CD4-positive, alpha-beta T cell (primary cell): ENCODE measurements at regions of chr11 and their contacts with region 1.

Region 1: DNA sequence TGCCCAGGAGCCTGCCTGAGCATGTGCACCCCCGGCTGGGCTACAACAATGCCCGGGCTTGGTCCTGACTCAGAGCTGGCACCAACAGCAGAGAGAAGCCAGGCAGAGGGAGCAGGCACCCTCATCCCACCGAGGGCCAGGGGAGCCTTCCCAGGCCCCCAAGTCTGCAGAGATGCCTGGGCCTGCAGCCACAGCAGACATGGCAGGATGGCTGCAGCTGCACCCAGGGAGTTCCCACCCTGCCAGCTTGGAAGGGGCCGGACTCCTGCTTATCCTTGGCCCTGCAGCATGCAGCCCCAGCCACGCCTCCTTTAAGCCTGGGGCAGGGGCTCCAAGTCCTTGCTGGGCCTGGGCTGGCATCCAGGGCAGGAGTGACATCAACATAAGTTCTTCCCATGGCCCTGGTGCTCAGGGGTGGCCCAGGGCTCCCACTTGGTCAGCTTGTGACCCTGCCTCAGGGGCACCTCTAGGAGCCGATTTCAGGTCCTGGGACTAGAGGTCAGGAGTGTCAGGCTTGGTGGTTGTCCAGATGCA is 26.7 kb downstream of the OR10D3 start:
- DNase-seq: no peak
- ATAC-seq: no peak
- H3K4me3 ChIP-seq: no peak overlapping the region
- H3K4me3 Mint-ChIP-seq: no peak overlapping the region
- H3K27ac ChIP-seq: no peak overlapping the region
- H3K27ac Mint-ChIP-seq: no peak overlapping the region
- H3K4me1 ChIP-seq: no peaks in the 10 kb centered on the region
- H3K4me1 Mint-ChIP-seq: no peaks in the 10 kb centered on the region
- H3K27me3 ChIP-seq: peaks cover 0 to 2% of the 10 kb centered on the region in 2 experiments
- H3K27me3 Mint-ChIP-seq: no peaks in the 10 kb centered on the region
- CTCF ChIP-seq: no peak

Region 2: DNA sequence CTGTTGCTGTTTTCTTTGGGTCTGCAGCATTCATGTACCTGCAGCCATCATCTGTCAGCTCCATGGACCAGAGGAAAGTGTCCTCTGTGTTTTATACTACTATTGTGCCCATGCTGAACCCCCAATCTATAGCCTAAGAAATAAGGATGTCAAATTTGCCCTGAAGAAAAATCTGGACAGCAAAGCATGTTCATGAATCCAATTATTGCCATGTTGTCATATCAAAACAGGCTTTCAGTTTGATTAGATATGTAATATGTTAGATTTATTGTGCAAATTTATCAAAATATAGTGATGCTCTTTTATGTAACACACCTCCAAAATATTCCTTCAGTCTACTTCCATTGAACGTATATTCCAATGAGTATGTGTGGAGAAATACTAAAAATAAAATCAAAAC is 15.6 kb after region 1 on chr11:
- CTCF ChIA-PET with region 1: no interaction called
- POLR2A ChIA-PET with region 1: no interaction called
- intact Hi-C with region 1: loop called in 1 of 2 experiments (anchors 1 kb)
- DNase-seq: no peak
- ATAC-seq: no peak
- H3K4me3 ChIP-seq: no peak overlapping the region
- H3K4me3 Mint-ChIP-seq: no peak overlapping the region
- H3K27ac ChIP-seq: no peak overlapping the region
- H3K27ac Mint-ChIP-seq: no peak overlapping the region
- H3K4me1 ChIP-seq: no peaks in the 10 kb centered on the region
- H3K4me1 Mint-ChIP-seq: no peaks in the 10 kb centered on the region
- H3K27me3 ChIP-seq: no peaks in the 10 kb centered on the region
- H3K27me3 Mint-ChIP-seq: peaks cover 16% of the 10 kb centered on the region
- CTCF ChIP-seq: no peak